Common myeloid progenitor, CD34-positive (primary cell): ENCODE measurements at regions of chr9 and their contacts with region 1.

Region 1: DNA sequence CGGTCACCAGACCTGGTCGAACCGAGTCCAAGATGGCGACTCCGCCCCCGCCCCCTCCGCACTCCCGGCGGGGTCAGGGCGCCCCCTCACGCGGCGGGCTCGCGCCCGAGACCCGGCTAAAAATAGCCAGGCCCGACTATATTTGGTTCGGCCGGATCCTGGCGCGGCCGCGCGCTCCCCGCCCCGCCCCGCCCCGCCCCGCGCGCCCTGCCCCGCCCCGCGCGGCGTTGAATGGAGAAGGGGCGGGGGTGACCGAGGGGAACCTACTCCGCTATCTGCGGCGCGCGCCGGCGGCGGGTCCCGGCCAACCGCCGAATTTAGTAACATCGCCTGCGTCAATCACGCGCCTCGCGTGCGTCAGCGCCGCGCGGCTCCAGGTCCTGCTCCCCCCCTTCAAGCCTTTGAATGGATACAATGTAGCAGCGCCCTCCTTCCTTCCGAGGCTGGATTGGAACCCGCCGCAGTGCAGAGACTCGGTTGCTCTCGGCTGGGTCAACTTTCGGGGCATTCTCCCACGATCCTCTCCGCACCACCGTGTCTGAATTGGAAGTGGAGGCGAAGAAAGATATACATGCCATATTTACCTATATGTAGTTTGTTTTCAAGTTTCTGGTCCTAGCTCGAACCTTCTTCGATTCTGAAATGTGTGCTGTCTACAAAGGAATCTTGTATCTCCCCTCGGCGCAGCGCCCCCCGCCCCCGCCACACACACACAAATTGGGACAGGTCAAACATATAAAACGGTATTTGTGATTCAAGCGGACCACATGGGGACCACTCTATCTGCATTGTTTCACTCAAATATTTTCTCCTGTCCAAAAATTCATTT is 1.6 kb upstream of the NR4A3 start:
- DNase-seq: peak; percentile 96 to 98 (median 98)
- H3K4me3 ChIP-seq: peak overlapping the region; percentile 73 to 94 (median 82)
- H3K27ac ChIP-seq: peak overlapping the region; percentile 86 to 92
- H3K4me1 ChIP-seq: peaks cover 14 to 59% (median 56%) of the 10 kb centered on the region in 4 experiments
- H3K27me3 ChIP-seq: peaks cover 0 to 29% (median 14%) of the 10 kb centered on the region in 5 experiments

Region 2: GRCh38 chr9:99736291-99736690 is 83.8 kb before region 1 on chr9:
- CTCF ChIA-PET with region 1: no interaction called
- POLR2A ChIA-PET with region 1: no interaction called
- DNase-seq: no peak
- H3K4me3 ChIP-seq: no peak overlapping the region
- H3K27ac ChIP-seq: no peak overlapping the region
- H3K4me1 ChIP-seq: peaks cover 19 to 38% (median 22%) of the 10 kb centered on the region in 4 experiments
- H3K27me3 ChIP-seq: no peaks in the 10 kb centered on the region

Region 3: GRCh38 chr9:99833735-99834134 is 13.7 kb after region 1 on chr9:
- CTCF ChIA-PET with region 1: interaction called, 13 read pairs
- POLR2A ChIA-PET with region 1: interaction called, 3 read pairs
- DNase-seq: peak in 2 of 3 donors; percentile 44 to 69
- H3K4me3 ChIP-seq: no peak overlapping the region
- H3K27ac ChIP-seq: no peak overlapping the region
- H3K4me1 ChIP-seq: peaks cover 0 to 16% (median 1%) of the 10 kb centered on the region in 4 experiments
- H3K27me3 ChIP-seq: peaks cover 7 to 17% (median 13%) of the 10 kb centered on the region in 5 experiments

Region 4: GRCh38 chr9:99845063-99845462 is 25.0 kb after region 1 on chr9:
- CTCF ChIA-PET with region 1: interaction called, 10 read pairs
- POLR2A ChIA-PET with region 1: interaction called, 3 read pairs
- DNase-seq: no peak
- H3K4me3 ChIP-seq: no peak overlapping the region
- H3K27ac ChIP-seq: no peak overlapping the region
- H3K4me1 ChIP-seq: peaks cover 0 to 6% (median under 1%) of the 10 kb centered on the region in 4 experiments
- H3K27me3 ChIP-seq: no peaks in the 10 kb centered on the region

Region 5: GRCh38 chr9:99906403-99907207 is 86.5 kb after region 1 on chr9 and contains the start of gene STX17:
- CTCF ChIA-PET with region 1: interaction called, 6 read pairs
- POLR2A ChIA-PET with region 1: interaction called, 12 read pairs
- DNase-seq: peak; percentile 86 to 93 (median 92)
- H3K4me3 ChIP-seq: peak within 1 kb of the TSS; percentile 76 to 96 (median 91)
- H3K27ac ChIP-seq: peak within 1 kb of the TSS; percentile 94 to 97
- H3K4me1 ChIP-seq: peaks cover 13 to 23% (median 18%) of the 10 kb centered on the region in 4 experiments
- H3K27me3 ChIP-seq: no peaks in the 10 kb centered on the region

Region 6: GRCh38 chr9:100011062-100011681 is 191.1 kb after region 1 on chr9:
- CTCF ChIA-PET with region 1: interaction called, 10 read pairs
- POLR2A ChIA-PET with region 1: no interaction called
- DNase-seq: peak; percentile 78 to 89 (median 85)
- H3K4me3 ChIP-seq: no peak overlapping the region
- H3K27ac ChIP-seq: no peak overlapping the region
- H3K4me1 ChIP-seq: no peaks in the 10 kb centered on the region
- H3K27me3 ChIP-seq: no peaks in the 10 kb centered on the region

Region 7: GRCh38 chr9:100074093-100074492 is 254.0 kb after region 1 on chr9:
- CTCF ChIA-PET with region 1: no interaction called
- POLR2A ChIA-PET with region 1: no interaction called
- DNase-seq: no peak
- H3K4me3 ChIP-seq: no peak overlapping the region
- H3K27ac ChIP-seq: no peak overlapping the region
- H3K4me1 ChIP-seq: no peaks in the 10 kb centered on the region
- H3K27me3 ChIP-seq: no peaks in the 10 kb centered on the region